ENCODE measurements at regions of chr16 and their contacts with region 1.

Region 1: DNA sequence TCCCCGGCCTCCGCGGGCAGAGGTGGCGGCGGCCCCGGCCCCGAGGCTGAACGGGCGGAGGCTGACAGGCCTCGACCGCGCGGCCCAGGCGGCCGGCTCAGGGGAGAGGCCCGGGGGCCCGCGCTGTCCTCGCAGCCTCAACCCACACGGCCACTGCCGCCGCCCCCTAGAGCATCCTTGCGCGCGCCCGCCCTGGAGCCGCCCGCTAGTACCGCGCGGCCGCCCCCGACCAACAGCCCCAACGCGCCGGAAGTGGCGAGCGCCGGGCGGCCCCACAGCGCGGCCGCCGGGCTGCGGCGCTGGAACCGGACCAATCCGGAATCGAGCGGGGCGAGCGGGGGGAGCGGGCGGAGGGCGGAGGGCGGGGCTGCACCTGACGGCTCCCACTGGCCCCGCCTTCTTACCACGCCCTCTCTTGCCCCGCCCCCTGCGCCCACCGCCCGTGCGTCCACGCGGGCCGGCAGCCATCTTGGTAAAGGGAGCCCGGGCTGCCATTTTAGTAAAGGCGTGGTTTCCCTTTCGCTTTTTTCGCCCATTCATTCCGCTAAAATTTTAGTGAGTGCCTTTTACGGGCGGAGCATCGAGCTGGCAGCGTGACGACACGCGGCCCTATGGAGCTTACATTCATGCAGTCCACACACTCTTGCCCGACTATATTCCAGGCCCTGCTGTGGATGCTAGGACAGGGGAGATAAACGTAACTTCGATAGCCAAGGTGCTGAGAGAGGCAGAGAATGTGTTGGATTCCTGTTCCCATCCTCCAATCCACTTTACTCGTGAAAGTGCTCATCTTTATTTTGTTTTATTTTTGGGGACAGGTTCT is at the start of gene XPO6:
- DNase-seq: peak; percentile 98
- ATAC-seq: peak; percentile 95
- total RNA-seq, gene XPO6: 25.7 TPM

Region 2: DNA sequence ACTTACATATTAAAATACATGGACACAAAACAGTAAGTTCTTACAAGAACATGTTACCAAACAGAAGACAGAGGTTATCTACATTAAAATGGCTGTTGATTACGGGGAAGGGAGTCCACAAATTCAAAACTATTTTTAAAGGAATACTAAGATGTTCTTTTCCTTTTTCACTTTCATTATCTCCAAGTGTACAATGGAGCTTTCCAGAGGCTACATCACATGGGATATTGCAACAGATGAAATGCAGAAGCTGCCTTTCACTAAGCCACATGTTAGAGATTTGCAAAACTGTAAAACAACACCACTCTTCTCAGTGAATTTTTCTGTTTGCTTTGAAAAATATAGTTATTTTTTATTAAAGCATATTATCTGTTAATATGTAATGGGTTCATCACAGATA is 53.8 kb before region 1 on chr16:
- intact Hi-C with region 1: loop called (anchors 10 kb)
- DNase-seq: no peak
- ATAC-seq: peak; percentile 79

Region 3: DNA sequence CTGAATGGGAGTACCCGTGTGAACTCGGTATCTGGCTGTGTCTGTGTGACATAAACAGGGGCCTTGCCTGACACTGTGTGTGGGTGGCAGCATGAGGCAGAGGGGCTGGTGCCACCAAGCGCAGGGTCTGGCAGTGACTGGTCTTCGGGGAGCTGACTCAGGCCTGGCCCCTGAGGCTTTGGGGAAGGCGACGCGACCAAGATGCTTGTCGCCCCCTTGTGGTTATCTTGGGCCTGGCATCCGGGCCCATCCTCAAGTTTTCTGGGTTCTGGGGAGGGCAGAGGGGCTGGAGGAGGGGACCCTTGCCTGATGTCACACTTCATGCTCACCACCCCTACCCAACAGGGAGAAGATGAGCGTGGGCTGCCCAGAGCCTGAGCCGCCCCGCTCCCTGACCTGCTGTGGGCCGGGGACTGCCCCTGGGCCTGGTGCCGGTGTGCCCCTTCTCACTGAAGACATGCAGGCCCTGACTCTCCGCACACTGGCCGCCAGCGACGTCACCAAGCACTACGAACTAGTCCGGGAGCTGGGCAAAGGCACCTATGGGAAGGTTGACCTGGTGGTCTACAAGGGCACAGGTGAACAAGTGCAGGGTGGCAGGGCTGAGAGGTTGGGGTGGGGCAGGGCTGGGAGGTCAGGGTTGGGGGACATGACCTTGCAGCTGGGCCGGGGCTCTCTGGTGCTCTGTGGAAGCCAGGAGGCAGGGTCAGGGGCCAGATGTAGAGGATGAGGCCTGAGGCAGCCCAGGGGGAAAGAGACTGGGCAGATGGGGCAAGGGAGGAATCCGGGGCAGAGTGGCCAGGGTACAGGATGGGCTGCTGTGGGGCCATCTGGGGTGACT is 105.3 kb after region 1 on chr16:
- intact Hi-C with region 1: no loop called
- DNase-seq: peak; percentile 60
- ATAC-seq: peak; percentile 50

Region 4: GRCh38 chr16:28491970-28492474 is 280.1 kb after region 1 on chr16 and contains the start of gene CLN3:
- intact Hi-C with region 1: no loop called
- DNase-seq: peak; percentile 91
- ATAC-seq: peak; percentile 98
- total RNA-seq, gene CLN3: 13.4 TPM

Measured in left ventricle myocardium superior (tissue), 1 donor.